ENCODE measurements at regions of chr5 and their contacts with region 1.

Region 1: DNA sequence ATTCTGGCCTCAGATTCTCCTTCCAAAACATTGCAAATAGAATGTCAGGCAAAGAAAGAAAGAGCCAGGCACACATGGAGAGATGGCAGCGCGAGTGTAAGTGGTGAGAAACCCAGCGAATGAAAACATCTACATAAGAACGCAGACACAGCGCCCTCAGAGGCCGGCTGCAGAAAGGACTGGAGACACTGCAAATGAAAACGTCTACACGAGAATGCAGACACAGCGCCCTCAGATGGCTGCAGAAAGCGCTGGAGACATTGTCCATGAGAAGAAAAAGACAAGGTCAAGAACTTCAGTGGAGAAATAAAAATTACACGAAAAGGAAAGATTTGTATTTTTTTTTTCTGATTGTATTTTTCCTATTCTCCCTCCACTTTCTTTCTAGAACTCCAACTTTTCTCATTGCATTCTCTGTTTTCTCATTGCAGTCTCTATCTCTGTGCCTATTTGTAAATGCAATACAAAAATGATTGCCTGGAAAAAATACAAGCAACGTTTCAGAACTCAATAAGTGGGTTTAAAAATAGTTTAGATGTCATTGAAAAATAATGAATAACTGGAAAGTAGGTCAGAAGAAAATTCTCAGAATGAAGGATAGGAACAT is 117.9 kb upstream of the LPCAT1 start:
- DNase-seq: peak; percentile 59 to 88 (median 76)
- ATAC-seq: peak; percentile 92
- H3K4me3 ChIP-seq: no peak overlapping the region
- H3K4me3 Mint-ChIP-seq: peak overlapping the region; percentile 8
- H3K27ac ChIP-seq: no peak overlapping the region
- H3K27ac Mint-ChIP-seq: no peak overlapping the region
- H3K4me1 ChIP-seq: peaks cover 17% of the 10 kb centered on the region
- H3K4me1 Mint-ChIP-seq: peaks cover 13% of the 10 kb centered on the region
- H3K27me3 ChIP-seq: peaks cover 17 to 21% of the 10 kb centered on the region in 2 experiments
- H3K27me3 Mint-ChIP-seq: peaks cover 27% of the 10 kb centered on the region
- CTCF ChIP-seq: peak; percentile 100

Region 2: GRCh38 chr5:1167728-1168709 is 473.6 kb before region 1 on chr5:
- CTCF ChIA-PET with region 1: interaction called, 46 read pairs
- POLR2A ChIA-PET with region 1: interaction called, 5 read pairs
- intact Hi-C with region 1: loop called in 1 of 2 experiments (anchors 1 kb)
- DNase-seq: peak; percentile 31 to 83 (median 71)
- ATAC-seq: peak; percentile 86
- H3K4me3 ChIP-seq: peak overlapping the region; percentile 19 to 31
- H3K4me3 Mint-ChIP-seq: peak overlapping the region; percentile 80
- H3K27ac ChIP-seq: no peak overlapping the region
- H3K27ac Mint-ChIP-seq: no peak overlapping the region
- H3K4me1 ChIP-seq: peaks cover 7% of the 10 kb centered on the region
- H3K4me1 Mint-ChIP-seq: peaks cover 16% of the 10 kb centered on the region
- H3K27me3 ChIP-seq: peaks cover 0 to 3% of the 10 kb centered on the region in 2 experiments
- H3K27me3 Mint-ChIP-seq: peaks cover 6% of the 10 kb centered on the region
- CTCF ChIP-seq: peak; percentile 87

Region 3: GRCh38 chr5:1315709-1316587 is 325.7 kb before region 1 on chr5:
- CTCF ChIA-PET with region 1: interaction called, 3 read pairs
- POLR2A ChIA-PET with region 1: no interaction called
- intact Hi-C with region 1: loop called in 1 of 2 experiments (anchors 5 kb)
- DNase-seq: peak in 8 of 9 experiments; percentile 34 to 83 (median 70)
- ATAC-seq: peak; percentile 65
- H3K4me3 ChIP-seq: peak overlapping the region; percentile 40 to 54
- H3K4me3 Mint-ChIP-seq: peak overlapping the region; percentile 82
- H3K27ac ChIP-seq: peak overlapping the region; percentile 45
- H3K27ac Mint-ChIP-seq: peak overlapping the region; percentile 94
- H3K4me1 ChIP-seq: peaks cover 58% of the 10 kb centered on the region
- H3K4me1 Mint-ChIP-seq: peaks cover 61% of the 10 kb centered on the region
- H3K27me3 ChIP-seq: no peaks in the 10 kb centered on the region
- H3K27me3 Mint-ChIP-seq: no peaks in the 10 kb centered on the region
- CTCF ChIP-seq: no peak

Region 4: GRCh38 chr5:1385395-1386273 is 256.0 kb before region 1 on chr5:
- CTCF ChIA-PET with region 1: interaction called, 17 read pairs
- POLR2A ChIA-PET with region 1: interaction called, 5 read pairs
- intact Hi-C with region 1: loop called (anchors 1 to 2 kb)
- DNase-seq: peak; percentile 73 to 93 (median 88)
- ATAC-seq: peak; percentile 77
- H3K4me3 ChIP-seq: peak overlapping the region; percentile 66 to 73
- H3K4me3 Mint-ChIP-seq: peak overlapping the region; percentile 97
- H3K27ac ChIP-seq: peak overlapping the region; percentile 94 to 96
- H3K27ac Mint-ChIP-seq: peak overlapping the region; percentile 100
- H3K4me1 ChIP-seq: peaks cover 17% of the 10 kb centered on the region
- H3K4me1 Mint-ChIP-seq: peaks cover 30% of the 10 kb centered on the region
- H3K27me3 ChIP-seq: no peaks in the 10 kb centered on the region
- H3K27me3 Mint-ChIP-seq: no peaks in the 10 kb centered on the region
- CTCF ChIP-seq: no peak

Region 5: GRCh38 chr5:1488943-1489680 is 152.6 kb before region 1 on chr5:
- CTCF ChIA-PET with region 1: interaction called, 13 read pairs
- POLR2A ChIA-PET with region 1: no interaction called
- intact Hi-C with region 1: no loop called
- DNase-seq: peak in 5 of 9 experiments; percentile 24 to 75 (median 48)
- ATAC-seq: peak; percentile 76
- H3K4me3 ChIP-seq: no peak overlapping the region
- H3K4me3 Mint-ChIP-seq: no peak overlapping the region
- H3K27ac ChIP-seq: peak overlapping the region in 1 of 2 experiments; percentile 72
- H3K27ac Mint-ChIP-seq: peak overlapping the region; percentile 57
- H3K4me1 ChIP-seq: peaks cover 25% of the 10 kb centered on the region
- H3K4me1 Mint-ChIP-seq: peaks cover 16% of the 10 kb centered on the region
- H3K27me3 ChIP-seq: no peaks in the 10 kb centered on the region
- H3K27me3 Mint-ChIP-seq: no peaks in the 10 kb centered on the region
- CTCF ChIP-seq: no peak

Region 6: GRCh38 chr5:1594357-1595106 is 47.1 kb before region 1 on chr5:
- CTCF ChIA-PET with region 1: interaction called, 5 read pairs
- POLR2A ChIA-PET with region 1: no interaction called
- intact Hi-C with region 1: loop called (anchors 2 to 5 kb)
- DNase-seq: peak; percentile 75 to 94 (median 89)
- ATAC-seq: peak; percentile 94
- H3K4me3 ChIP-seq: peak overlapping the region; percentile 67 to 90
- H3K4me3 Mint-ChIP-seq: peak overlapping the region; percentile 81
- H3K27ac ChIP-seq: peak overlapping the region; percentile 48 to 56
- H3K27ac Mint-ChIP-seq: peak overlapping the region; percentile 62
- H3K4me1 ChIP-seq: peaks cover 3% of the 10 kb centered on the region
- H3K4me1 Mint-ChIP-seq: peaks cover 8% of the 10 kb centered on the region
- H3K27me3 ChIP-seq: no peaks in the 10 kb centered on the region
- H3K27me3 Mint-ChIP-seq: no peaks in the 10 kb centered on the region
- CTCF ChIP-seq: peak; percentile 37

Region 7: DNA sequence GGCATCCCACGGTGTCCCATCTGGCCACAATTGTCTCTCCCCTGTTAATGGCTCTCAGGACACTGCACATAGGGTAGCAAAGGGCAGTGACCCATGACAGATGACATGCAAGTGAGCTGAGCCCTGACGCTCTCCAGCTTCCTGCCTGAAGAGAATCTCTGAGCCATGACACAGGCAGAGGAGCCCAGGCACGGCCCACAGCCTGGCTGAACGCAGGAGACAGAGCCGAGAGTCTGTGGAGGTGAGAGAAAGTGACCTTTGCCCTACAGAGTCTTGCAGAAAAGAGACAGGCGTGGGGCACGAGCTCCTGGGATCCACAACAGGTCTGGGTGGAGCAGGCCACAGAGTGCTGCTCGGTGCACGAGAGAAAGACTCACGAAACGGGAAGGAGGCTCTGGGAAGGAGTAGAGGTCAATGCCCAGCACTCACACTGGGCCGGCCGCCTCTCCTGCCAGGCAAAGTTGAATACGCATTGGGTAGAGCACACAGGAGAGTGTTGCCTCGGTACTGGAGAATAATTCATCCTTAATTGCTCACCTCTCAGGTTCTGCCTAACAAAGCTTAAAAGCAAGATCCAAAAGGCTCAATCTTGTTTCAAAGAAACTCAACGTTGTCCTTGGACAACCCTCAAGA is 67.6 kb after region 1 on chr5:
- CTCF ChIA-PET with region 1: no interaction called
- POLR2A ChIA-PET with region 1: no interaction called
- intact Hi-C with region 1: no loop called
- DNase-seq: no peak
- ATAC-seq: no peak
- H3K4me3 ChIP-seq: no peak overlapping the region
- H3K4me3 Mint-ChIP-seq: peak overlapping the region; percentile 75
- H3K27ac ChIP-seq: no peak overlapping the region
- H3K27ac Mint-ChIP-seq: peak overlapping the region; percentile 75
- H3K4me1 ChIP-seq: peaks cover 3% of the 10 kb centered on the region
- H3K4me1 Mint-ChIP-seq: peaks cover 12% of the 10 kb centered on the region
- H3K27me3 ChIP-seq: peaks cover 0 to 7% of the 10 kb centered on the region in 2 experiments
- H3K27me3 Mint-ChIP-seq: peaks cover 35% of the 10 kb centered on the region
- CTCF ChIP-seq: no peak

Region 8: DNA sequence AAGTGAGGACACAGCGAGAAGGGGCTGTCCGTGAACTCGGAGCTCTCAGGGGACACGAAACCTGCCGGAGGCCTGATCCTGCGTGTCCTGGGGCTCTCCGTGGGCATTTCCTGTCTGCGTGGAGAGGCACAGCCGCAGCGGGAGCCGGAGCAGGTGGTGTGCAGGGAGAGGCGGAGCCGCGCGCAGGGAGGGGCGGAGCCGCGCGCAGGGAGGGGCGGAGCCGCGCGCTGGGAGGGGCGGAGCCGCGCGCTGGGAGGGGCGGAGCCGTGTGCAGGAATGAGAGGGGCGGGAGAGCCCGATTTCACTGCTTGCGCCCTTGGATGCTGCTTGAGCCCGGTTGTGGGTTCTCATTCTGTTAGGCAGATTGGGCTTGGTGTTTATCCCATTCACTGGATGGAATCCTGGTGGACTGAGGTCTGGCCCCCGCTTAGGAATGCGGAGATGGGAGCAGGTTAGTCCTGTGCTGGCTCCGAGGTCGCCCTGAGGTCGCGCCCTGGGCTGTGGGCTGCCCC is 186.3 kb after region 1 on chr5:
- CTCF ChIA-PET with region 1: no interaction called
- POLR2A ChIA-PET with region 1: no interaction called
- intact Hi-C with region 1: no loop called
- DNase-seq: peak in 5 of 9 experiments; percentile 20 to 56 (median 22)
- ATAC-seq: peak; percentile 75
- H3K4me3 ChIP-seq: no peak overlapping the region
- H3K4me3 Mint-ChIP-seq: peak overlapping the region; percentile 5
- H3K27ac ChIP-seq: no peak overlapping the region
- H3K27ac Mint-ChIP-seq: no peak overlapping the region
- H3K4me1 ChIP-seq: no peaks in the 10 kb centered on the region
- H3K4me1 Mint-ChIP-seq: no peaks in the 10 kb centered on the region
- H3K27me3 ChIP-seq: no peaks in the 10 kb centered on the region
- H3K27me3 Mint-ChIP-seq: no peaks in the 10 kb centered on the region
- CTCF ChIP-seq: no peak

Region 9: GRCh38 chr5:2710910-2711309 is 1069.2 kb after region 1 on chr5:
- CTCF ChIA-PET with region 1: no interaction called
- POLR2A ChIA-PET with region 1: no interaction called
- intact Hi-C with region 1: no loop called
- DNase-seq: no peak
- ATAC-seq: no peak
- H3K4me3 ChIP-seq: no peak overlapping the region
- H3K4me3 Mint-ChIP-seq: no peak overlapping the region
- H3K27ac ChIP-seq: no peak overlapping the region
- H3K27ac Mint-ChIP-seq: no peak overlapping the region
- H3K4me1 ChIP-seq: no peaks in the 10 kb centered on the region
- H3K4me1 Mint-ChIP-seq: no peaks in the 10 kb centered on the region
- H3K27me3 ChIP-seq: no peaks in the 10 kb centered on the region
- H3K27me3 Mint-ChIP-seq: no peaks in the 10 kb centered on the region
- CTCF ChIP-seq: no peak

Region 10: DNA sequence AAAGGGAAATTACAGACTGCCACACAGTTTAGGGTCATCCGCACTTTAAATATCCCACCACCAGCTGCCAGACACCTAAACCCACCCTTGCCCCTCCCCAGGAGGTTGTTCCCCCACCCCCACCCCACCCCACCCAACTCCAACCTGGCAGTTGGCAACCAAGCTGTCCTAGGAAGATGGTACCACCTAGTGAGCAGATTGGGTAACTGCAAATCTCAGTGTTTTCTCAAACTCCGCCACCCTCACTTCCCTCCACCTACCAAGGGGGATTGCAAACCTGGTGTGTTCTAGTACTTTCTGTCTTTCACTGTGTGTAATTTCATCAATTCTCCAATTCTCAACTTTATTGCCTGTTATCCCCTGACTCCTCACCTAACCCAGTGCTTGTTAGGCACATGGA is 1433.6 kb after region 1 on chr5:
- CTCF ChIA-PET with region 1: no interaction called
- POLR2A ChIA-PET with region 1: no interaction called
- intact Hi-C with region 1: no loop called
- DNase-seq: no peak
- ATAC-seq: no peak
- H3K4me3 ChIP-seq: no peak overlapping the region
- H3K4me3 Mint-ChIP-seq: no peak overlapping the region
- H3K27ac ChIP-seq: no peak overlapping the region
- H3K27ac Mint-ChIP-seq: no peak overlapping the region
- H3K4me1 ChIP-seq: no peaks in the 10 kb centered on the region
- H3K4me1 Mint-ChIP-seq: no peaks in the 10 kb centered on the region
- H3K27me3 ChIP-seq: no peaks in the 10 kb centered on the region
- H3K27me3 Mint-ChIP-seq: peaks cover 2% of the 10 kb centered on the region
- CTCF ChIP-seq: no peak

Measured in CD8-positive, alpha-beta T cell (primary cell).